ENCODE measurements at regions of chr10 and their contacts with region 1.

Region 1: GRCh38 chr10:70146489-70147258 is at the start of gene TYSND1:
- DNase-seq: peak; percentile 90
- H3K4me3 Mint-ChIP-seq: peak within 1 kb of the TSS; percentile 92
- H3K27ac Mint-ChIP-seq: peak within 1 kb of the TSS; percentile 96
- H3K4me1 Mint-ChIP-seq: peaks cover 8% of the 10 kb centered on the region
- H3K27me3 Mint-ChIP-seq: no peaks in the 10 kb centered on the region
- total RNA-seq, gene TYSND1: 12.6 and 12.7 TPM in 2 replicates

Region 2: DNA sequence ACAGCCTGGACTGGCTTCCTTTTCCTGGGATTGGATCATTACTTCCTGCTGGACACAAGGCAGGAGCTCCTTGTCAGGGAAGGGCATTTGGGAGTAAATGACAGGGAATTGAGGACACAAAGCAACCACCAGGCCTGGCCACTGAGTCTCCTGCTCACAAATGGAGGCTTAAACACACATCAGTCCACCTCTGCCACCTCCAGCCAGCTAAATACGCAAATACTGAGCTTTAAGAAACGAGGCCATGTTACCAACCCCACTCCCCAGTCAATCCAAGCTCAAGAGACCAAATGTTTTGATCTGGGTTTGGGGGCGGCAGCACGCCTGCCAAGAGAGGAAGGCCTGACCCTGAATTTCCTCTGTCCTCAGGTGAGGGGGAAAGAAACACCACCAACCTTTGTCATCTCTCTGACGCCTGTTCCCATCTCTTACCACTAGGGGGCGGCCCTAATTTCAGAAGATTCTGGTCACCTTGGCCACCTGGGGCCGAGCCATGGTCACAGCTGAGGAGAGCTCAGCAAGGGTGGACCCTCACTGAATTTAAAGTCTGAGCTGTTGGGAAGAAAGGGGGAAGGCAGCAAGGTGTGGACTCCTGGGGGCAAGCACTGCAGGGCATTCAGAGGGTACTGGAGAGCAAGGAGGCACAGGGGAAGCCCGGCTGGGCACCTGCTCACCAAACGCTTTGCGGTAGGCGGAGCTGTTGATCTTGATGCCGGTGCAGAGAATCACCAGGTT is 30.6 kb before region 1 on chr10:
- intact Hi-C with region 1: loop called (anchors 1 kb)
- DNase-seq: peak; percentile 41
- H3K4me3 Mint-ChIP-seq: no peak overlapping the region
- H3K27ac Mint-ChIP-seq: no peak overlapping the region
- H3K4me1 Mint-ChIP-seq: peaks cover 8% of the 10 kb centered on the region
- H3K27me3 Mint-ChIP-seq: peaks cover 2% of the 10 kb centered on the region

Region 3: GRCh38 chr10:70162892-70163201 is 16.2 kb after region 1 on chr10:
- intact Hi-C with region 1: loop called (anchors 1 kb)
- DNase-seq: peak; percentile 58
- H3K4me3 Mint-ChIP-seq: peak overlapping the region; percentile 32
- H3K27ac Mint-ChIP-seq: peak overlapping the region; percentile 82
- H3K4me1 Mint-ChIP-seq: peaks cover 68% of the 10 kb centered on the region
- H3K27me3 Mint-ChIP-seq: no peaks in the 10 kb centered on the region

Region 4: GRCh38 chr10:70197235-70197945 is 50.7 kb after region 1 on chr10:
- intact Hi-C with region 1: loop called (anchors 2 kb)
- DNase-seq: no peak
- H3K4me3 Mint-ChIP-seq: no peak overlapping the region
- H3K27ac Mint-ChIP-seq: peak overlapping the region; percentile 52
- H3K4me1 Mint-ChIP-seq: peaks cover 27% of the 10 kb centered on the region
- H3K27me3 Mint-ChIP-seq: no peaks in the 10 kb centered on the region

Region 5: DNA sequence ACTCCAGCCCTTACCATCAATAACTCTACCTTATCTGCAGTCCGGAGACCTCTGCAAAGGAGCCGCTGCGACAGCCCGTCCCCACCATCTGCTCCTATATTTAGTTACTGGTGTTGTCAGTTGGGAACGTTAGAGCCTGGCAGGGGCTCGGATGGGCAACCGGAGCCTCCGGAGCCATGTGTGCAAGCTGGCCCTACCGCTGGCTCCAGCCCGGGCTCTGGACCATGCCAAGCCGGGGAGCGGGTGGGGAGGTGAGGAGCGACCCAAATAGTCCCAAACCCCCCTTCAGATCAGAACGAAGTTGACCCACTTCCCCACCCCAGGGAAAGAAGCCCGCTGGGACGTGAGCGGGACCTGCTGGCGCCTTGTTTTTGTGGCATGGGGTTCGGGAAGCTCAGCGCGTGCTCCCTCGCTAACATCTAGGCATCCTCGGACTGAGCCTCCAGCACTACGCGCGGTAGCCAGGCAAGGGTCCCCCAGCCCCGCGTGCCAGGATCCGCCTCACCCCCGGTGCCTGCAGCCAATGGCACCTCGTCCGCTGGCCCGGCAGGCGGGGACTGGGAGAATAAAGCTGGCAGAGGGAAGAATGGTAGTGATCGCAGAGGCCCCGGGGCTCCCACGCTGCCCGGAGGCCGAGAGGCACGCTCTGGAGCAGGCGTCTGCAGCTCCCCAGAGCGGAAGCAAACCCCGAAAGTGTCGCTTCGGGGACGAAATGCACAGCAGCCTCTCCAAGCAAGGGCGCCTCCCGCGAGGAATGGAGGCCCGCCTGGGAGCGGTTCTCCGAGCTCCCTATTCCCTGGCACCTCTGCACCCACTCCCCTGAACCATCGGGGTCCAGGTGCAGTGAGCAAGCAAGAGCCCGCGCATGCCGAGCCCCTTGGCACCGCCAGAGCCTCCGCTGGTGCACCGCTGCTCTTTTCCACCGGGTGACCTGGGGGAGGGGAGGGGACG is 235.1 kb after region 1 on chr10:
- intact Hi-C with region 1: loop called (anchors 1 kb)
- DNase-seq: peak; percentile 31
- H3K4me3 Mint-ChIP-seq: peak overlapping the region; percentile 86
- H3K27ac Mint-ChIP-seq: no peak overlapping the region
- H3K4me1 Mint-ChIP-seq: peaks cover 14% of the 10 kb centered on the region
- H3K27me3 Mint-ChIP-seq: peaks cover 14% of the 10 kb centered on the region